ENCODE measurements at regions of chr5 and their contacts with region 1.

Region 1: DNA sequence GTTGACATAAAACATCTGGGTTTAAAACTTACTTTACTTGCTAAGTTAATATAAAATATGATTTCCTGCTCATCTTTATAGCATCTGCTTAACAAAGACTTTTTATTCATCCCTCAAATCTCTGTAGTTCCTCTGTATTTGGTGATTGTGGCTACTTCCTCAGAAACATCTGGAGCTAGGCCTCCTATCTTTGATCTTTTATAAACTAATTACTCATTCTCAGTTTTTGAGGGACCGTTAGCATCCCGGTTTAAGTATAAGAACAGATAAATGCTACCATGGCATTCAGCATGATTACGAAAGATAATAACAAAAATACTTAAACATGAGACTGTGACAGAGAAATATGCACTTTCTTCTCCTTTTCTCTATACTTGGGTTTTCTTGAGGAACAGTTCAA is 85.3 kb downstream of the SLC38A9 start:
- DNase-seq: no peak
- H3K4me3 ChIP-seq: no peak overlapping the region
- CTCF ChIP-seq: no peak

Region 2: DNA sequence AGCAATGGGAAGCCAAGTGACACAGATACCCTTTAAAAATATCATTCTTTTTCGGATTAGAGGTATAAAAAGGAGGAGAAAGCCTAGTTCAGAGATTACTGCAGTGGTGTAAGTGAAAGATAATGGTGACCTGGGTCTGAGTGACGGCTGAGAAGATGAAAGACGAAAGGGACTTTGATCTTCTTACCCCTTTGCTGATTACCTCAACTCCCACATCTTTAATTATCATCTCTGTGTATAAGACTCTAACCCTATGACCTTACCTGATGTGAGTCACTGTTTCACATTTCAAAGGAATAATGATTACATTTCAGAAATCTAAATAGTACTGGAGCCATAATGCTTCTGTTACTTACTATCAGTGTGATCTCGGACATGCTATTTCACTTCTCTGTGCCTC is 372.0 kb before region 1 on chr5:
- in situ Hi-C with region 1: no loop called
- DNase-seq: no peak
- H3K4me3 ChIP-seq: no peak overlapping the region
- CTCF ChIP-seq: no peak

Region 3: DNA sequence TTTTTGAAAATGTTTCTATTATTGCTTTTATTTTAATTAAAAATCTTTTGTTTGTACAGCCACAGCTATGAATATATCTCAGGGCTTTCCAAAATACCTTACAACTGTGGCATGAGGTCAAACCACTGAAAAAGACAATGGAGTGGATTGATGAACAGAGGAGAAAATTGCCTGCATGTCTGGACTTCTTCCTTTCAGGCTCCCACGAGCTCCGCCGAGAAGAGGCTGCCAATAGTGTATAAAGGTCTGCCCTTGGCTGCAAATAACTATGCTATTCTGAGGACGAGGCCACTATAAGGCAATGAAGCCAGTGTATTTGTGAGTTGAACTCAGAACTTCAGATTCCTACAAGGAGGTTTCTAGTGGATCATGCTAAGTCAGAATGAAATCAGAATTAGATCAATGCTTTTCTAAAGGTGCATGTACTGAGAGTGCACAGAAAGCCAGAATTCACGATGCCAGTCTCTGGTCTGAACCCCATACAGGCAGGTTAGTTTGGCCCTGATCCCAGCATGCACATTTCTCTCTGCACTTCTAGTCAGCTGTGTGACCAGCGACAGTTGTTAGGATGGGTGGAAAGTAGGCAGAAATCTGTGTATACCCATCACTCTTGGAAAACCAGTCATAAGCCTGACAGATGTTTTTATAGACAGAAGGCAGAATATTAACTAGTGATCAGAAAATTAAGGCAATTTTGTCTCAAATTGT is 49.3 kb before region 1 on chr5:
- in situ Hi-C with region 1: loop called (anchors 5 kb)
- DNase-seq: peak; percentile 48
- H3K4me3 ChIP-seq: no peak overlapping the region
- CTCF ChIP-seq: no peak

Region 4: DNA sequence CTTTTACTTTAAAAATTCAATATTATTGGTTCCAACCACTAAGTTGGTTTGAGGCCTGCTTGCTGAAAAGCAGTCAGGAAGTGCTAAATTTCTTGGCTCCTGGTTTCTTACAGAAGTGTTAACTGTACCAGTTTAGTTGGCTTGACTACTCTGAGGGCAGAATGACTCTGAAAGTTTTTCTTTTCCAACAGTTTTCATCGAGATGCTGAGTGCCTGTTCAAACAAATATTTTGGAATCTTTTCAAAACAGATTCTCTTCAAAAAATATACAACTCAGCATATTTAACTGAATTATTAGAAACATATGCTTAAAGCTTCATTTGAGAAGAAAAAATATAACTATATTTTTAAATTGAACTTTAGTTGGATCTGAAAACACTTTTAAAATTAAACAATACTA is 48.3 kb after region 1 on chr5:
- in situ Hi-C with region 1: no loop called
- DNase-seq: no peak
- H3K4me3 ChIP-seq: no peak overlapping the region
- CTCF ChIP-seq: no peak